Astrocyte of the spinal cord (primary cell): ENCODE measurements at regions of chr1 and their contacts with region 1.

Region 1: DNA sequence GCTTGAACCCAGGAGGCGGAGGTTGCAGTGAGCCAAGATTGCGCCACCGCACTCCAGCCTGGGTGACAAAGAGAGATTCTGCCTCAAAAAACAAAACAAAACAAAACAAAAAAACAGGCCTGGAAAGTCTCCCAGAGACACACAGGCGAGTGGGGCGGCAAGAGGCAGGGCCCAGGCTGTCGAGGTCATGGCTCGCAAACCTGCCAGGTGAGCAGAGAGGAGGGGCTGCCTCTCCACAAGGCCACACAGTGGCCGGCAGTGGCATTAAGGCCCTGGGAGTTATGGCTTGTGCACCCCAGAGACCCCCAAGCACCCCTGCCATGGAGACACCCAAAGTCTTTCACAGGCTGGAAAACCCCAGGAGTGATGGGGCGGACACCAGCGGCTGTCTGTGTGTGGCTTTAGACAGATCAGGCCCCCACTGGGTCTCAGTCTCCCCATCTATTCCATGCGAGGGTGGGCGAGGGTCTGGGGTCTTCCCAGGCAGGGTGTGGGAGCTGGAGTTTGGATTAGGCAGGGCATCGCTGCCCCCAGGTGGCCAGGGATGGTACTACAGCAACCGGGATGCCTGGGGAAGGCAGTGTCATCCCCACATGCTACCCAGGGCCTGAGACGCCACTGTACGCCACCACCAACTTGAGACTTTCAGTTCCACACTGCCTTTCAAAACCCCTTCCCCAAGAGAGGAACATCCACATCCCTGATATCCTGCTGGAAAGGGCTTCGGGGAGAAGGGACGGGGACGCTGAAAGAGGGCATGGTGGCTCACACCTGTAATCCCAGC is 7.3 kb upstream of the CTRC start:
- DNase-seq: no peak
- H3K4me3 ChIP-seq: no peak overlapping the region
- CTCF ChIP-seq: peak; percentile 97

Region 2: DNA sequence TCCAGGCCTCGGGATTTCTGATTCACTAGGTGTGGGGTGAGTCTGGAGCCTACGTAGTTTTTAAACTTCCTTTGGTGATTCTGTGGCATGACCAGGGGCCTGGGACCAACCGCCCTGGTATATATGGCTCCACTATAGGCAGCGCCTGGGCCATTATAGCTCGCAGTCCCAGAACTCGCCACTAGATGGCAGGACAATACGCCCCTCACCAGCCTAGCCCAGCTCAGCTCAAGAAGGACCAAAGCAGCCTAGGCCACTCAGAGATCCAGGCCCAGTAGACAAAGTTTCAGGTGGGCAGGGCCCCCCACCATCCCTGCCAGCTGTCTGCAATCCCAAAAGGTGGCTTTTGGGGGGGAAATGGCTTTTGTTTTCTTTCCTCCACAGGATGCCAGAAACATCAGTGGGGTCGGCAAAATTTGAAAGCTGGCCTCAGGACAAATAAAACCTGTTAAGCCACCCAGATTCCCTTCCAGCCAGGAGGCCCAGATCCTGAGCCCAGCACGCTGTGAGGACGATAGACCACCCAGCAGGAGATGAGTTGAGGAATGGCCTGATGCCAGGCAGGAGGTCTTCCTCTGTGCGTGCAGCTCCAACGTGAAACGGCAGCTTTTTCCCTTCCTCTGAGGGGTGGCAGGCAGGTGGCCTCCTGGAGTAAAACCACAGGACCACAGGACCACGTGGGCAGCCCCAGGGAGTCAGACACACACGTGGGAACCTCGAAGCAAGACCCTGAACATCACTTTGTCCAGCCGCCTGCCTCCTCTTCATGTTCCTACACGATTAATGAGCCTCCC is 302.3 kb before region 1 on chr1:
- in situ Hi-C with region 1: loop called (anchors 25 kb)
- DNase-seq: peak; percentile 62
- H3K4me3 ChIP-seq: no peak overlapping the region
- CTCF ChIP-seq: peak; percentile 94